Activated CD8-positive, alpha-beta T cell treated with anti-CD3 and anti-CD28 coated beads, Interleukin-2, amount 10 ng/mL, durations not matched to agents 7 days and 5 days (primary cell): ENCODE measurements at regions of chr11 and their contacts with region 1.

Region 1: DNA sequence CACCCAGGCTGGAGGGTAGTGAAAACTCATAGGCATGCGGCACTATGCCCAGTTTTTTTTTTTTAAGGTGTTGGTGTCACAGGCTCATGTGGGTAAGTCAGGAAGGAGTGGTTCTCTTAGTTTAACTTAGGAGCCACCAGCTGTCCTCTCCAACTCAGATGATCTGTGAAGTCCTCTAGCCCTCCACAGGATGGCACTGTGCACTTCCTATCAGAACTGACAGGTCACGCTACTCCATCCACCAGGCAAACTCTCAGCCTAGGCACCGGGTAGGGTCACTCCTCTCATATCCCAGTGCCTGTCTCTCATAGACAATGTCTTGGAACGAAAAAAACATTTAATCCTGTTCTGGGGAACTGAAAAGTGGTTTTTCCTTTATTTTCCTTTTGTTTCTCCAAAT is 16.5 kb downstream of the NAP1L4 start:
- DNase-seq: peak; percentile 70
- ATAC-seq: peak; percentile 90
- H3K4me3 Mint-ChIP-seq: no peak overlapping the region
- H3K27ac Mint-ChIP-seq: peak overlapping the region; percentile 43
- H3K4me1 Mint-ChIP-seq: peaks cover 36% of the 10 kb centered on the region
- H3K27me3 Mint-ChIP-seq: no peaks in the 10 kb centered on the region

Region 2: DNA sequence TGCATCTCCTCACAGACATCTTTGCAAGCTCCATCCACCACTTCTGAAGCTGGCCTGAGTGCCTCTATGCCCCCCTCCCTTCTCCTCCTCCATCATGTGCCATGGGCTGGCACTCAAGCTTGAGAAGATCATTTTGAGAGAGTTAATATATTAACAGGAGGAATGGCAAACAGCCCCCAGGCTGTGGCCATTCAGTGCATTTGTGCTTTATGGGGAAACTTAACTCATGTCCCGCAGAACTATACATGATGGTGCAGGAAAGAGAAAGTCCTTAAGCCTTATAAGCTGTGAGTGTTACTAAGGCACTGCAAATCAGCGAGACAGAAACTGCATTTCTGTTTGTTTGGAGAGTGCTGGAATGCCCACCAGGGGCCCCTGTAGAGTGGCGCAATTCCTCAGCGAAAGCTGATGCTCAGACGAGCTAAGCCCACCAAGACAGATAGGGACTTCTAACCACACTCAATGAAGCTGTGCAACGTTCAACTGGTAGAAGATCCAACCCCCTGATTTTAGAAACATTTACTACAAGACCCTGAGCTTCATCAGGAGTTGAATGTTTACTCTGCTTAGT is 19.6 kb before region 1 on chr11:
- CTCF ChIA-PET with region 1: interaction called, 17 read pairs
- POLR2A ChIA-PET with region 1: interaction called, 4 read pairs
- DNase-seq: no peak
- ATAC-seq: no peak
- H3K4me3 Mint-ChIP-seq: no peak overlapping the region
- H3K27ac Mint-ChIP-seq: peak overlapping the region; percentile 60
- H3K4me1 Mint-ChIP-seq: peaks cover 49% of the 10 kb centered on the region
- H3K27me3 Mint-ChIP-seq: no peaks in the 10 kb centered on the region

Region 3: DNA sequence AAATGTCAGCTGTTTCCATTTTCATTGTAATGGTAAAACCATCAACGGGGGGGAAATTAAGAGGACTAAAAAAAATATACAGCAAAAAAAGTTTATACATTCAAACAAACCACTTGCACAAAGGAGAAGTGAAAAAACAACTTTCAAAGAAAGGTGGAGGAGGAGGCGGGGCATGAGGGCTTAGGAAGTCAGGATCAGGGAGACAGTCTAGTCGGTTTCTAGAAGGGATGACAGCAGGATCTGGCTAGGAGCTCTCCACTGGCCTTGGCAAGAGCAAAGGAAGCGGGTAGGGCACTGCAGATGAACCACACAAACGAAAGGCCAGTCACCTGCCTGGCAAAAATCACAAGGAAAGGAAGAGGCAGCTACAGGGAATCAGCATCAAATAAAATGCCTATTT is 14.5 kb before region 1 on chr11:
- CTCF ChIA-PET with region 1: interaction called, 12 read pairs
- POLR2A ChIA-PET with region 1: interaction called, 3 read pairs
- DNase-seq: no peak
- ATAC-seq: no peak
- H3K4me3 Mint-ChIP-seq: no peak overlapping the region
- H3K27ac Mint-ChIP-seq: peak overlapping the region; percentile 54
- H3K4me1 Mint-ChIP-seq: peaks cover 28% of the 10 kb centered on the region
- H3K27me3 Mint-ChIP-seq: no peaks in the 10 kb centered on the region

Region 4: GRCh38 chr11:3014057-3014938 is 38.7 kb after region 1 on chr11:
- CTCF ChIA-PET with region 1: interaction called, 77 read pairs
- POLR2A ChIA-PET with region 1: interaction called, 14 read pairs
- DNase-seq: peak; percentile 94
- ATAC-seq: peak; percentile 84
- H3K4me3 Mint-ChIP-seq: peak overlapping the region; percentile 56
- H3K27ac Mint-ChIP-seq: peak overlapping the region; percentile 95
- H3K4me1 Mint-ChIP-seq: peaks cover 95% of the 10 kb centered on the region
- H3K27me3 Mint-ChIP-seq: no peaks in the 10 kb centered on the region

Region 5: GRCh38 chr11:3037040-3037944 is 61.7 kb after region 1 on chr11:
- CTCF ChIA-PET with region 1: interaction called, 12 read pairs
- POLR2A ChIA-PET with region 1: no interaction called
- DNase-seq: peak; percentile 58
- ATAC-seq: peak; percentile 62
- H3K4me3 Mint-ChIP-seq: no peak overlapping the region
- H3K27ac Mint-ChIP-seq: peak overlapping the region; percentile 69
- H3K4me1 Mint-ChIP-seq: peaks cover 31% of the 10 kb centered on the region
- H3K27me3 Mint-ChIP-seq: no peaks in the 10 kb centered on the region